CD8-positive, alpha-beta T cell (primary cell): ENCODE measurements at regions of chr16 and their contacts with region 1.

Region 1: GRCh38 chr16:9123871-9124270 is 32.4 kb downstream of the HAPSTR1 start:
- DNase-seq: peak in 2 of 9 experiments; percentile 20 to 43
- ATAC-seq: no peak
- H3K4me3 ChIP-seq: no peak overlapping the region
- H3K4me3 Mint-ChIP-seq: no peak overlapping the region
- H3K27ac ChIP-seq: no peak overlapping the region
- H3K27ac Mint-ChIP-seq: peak overlapping the region; percentile 82
- H3K4me1 ChIP-seq: peaks cover 40% of the 10 kb centered on the region
- H3K4me1 Mint-ChIP-seq: peaks cover 63% of the 10 kb centered on the region
- H3K27me3 ChIP-seq: no peaks in the 10 kb centered on the region
- H3K27me3 Mint-ChIP-seq: no peaks in the 10 kb centered on the region
- CTCF ChIP-seq: no peak

Region 2: GRCh38 chr16:9099131-9099625 is 24.7 kb before region 1 on chr16:
- CTCF ChIA-PET with region 1: interaction called, 3 read pairs
- POLR2A ChIA-PET with region 1: interaction called, 3 read pairs
- intact Hi-C with region 1: loop called in 1 of 2 experiments (anchors 2 kb)
- DNase-seq: peak in 1 of 9 experiments; percentile 35
- ATAC-seq: no peak
- H3K4me3 ChIP-seq: peak overlapping the region in 1 of 2 experiments; percentile 9
- H3K4me3 Mint-ChIP-seq: peak overlapping the region; percentile 74
- H3K27ac ChIP-seq: peak overlapping the region in 1 of 2 experiments; percentile 34
- H3K27ac Mint-ChIP-seq: peak overlapping the region; percentile 74
- H3K4me1 ChIP-seq: peaks cover 97% of the 10 kb centered on the region
- H3K4me1 Mint-ChIP-seq: peaks cover 91% of the 10 kb centered on the region
- H3K27me3 ChIP-seq: no peaks in the 10 kb centered on the region
- H3K27me3 Mint-ChIP-seq: no peaks in the 10 kb centered on the region
- CTCF ChIP-seq: no peak

Region 3: DNA sequence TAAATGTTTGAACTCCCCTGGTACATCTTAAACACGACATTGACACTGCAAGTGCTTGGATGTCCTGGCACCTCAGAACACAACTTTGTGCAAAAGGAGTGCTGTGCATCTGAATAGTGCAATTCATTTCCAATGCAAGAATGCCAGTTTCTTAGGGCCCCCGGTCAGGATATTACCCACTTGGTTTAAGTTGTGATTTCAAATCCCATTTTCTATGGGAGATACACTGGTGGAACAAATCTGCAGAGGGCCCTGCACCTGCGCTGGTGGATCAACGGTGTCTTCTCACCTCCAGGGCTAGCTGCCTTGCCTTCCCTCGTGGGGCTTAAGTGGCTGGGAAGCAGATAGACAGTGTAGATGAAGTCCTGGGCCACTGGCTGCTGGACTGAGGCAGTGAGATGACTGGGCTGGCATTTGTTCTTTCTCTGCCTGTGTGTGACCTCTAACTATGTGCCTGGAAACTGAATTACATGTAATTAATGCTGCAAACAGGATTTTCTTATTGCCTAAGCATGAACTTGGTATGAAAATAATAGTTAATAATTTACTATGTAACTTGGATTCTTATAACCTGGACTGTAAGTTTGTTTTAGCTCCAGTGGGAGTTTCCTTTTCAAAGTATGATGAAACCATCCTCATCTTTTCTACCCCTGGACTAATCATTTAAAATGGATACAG is 11.6 kb before region 1 on chr16:
- CTCF ChIA-PET with region 1: no interaction called
- POLR2A ChIA-PET with region 1: interaction called, 3 read pairs
- intact Hi-C with region 1: loop called in 1 of 2 experiments (anchors 2 kb)
- DNase-seq: no peak
- ATAC-seq: no peak
- H3K4me3 ChIP-seq: no peak overlapping the region
- H3K4me3 Mint-ChIP-seq: peak overlapping the region; percentile 52
- H3K27ac ChIP-seq: peak overlapping the region in 1 of 2 experiments; percentile 41
- H3K27ac Mint-ChIP-seq: peak overlapping the region; percentile 68
- H3K4me1 ChIP-seq: peaks cover 78% of the 10 kb centered on the region
- H3K4me1 Mint-ChIP-seq: peaks cover 94% of the 10 kb centered on the region
- H3K27me3 ChIP-seq: no peaks in the 10 kb centered on the region
- H3K27me3 Mint-ChIP-seq: no peaks in the 10 kb centered on the region
- CTCF ChIP-seq: no peak

Region 4: DNA sequence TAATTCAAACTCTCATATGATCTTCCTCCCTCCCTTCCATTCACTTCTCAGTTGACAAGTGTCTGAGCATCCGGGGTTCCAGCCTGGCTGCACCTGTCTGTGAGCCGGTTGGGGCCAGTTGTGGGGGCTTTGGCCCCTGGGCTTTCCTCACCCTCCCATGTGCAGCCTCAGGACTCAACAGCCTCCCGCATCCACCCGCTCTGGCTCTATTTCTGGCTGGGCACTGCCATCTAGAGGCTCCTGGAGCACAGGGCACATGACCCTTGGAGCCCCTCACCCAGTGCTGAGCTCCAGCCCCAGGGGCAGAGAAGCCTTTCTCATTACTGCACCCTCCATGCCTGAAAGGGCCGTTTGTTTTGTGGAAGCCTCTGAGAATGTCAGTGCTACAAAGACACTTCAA is 10.9 kb after region 1 on chr16:
- CTCF ChIA-PET with region 1: interaction called, 25 read pairs
- POLR2A ChIA-PET with region 1: interaction called, 4 read pairs
- intact Hi-C with region 1: no loop called
- DNase-seq: peak; percentile 32 to 76 (median 64)
- ATAC-seq: peak; percentile 80
- H3K4me3 ChIP-seq: no peak overlapping the region
- H3K4me3 Mint-ChIP-seq: no peak overlapping the region
- H3K27ac ChIP-seq: no peak overlapping the region
- H3K27ac Mint-ChIP-seq: peak overlapping the region; percentile 55
- H3K4me1 ChIP-seq: peaks cover 13% of the 10 kb centered on the region
- H3K4me1 Mint-ChIP-seq: peaks cover 20% of the 10 kb centered on the region
- H3K27me3 ChIP-seq: no peaks in the 10 kb centered on the region
- H3K27me3 Mint-ChIP-seq: no peaks in the 10 kb centered on the region
- CTCF ChIP-seq: peak; percentile 68